ENCODE measurements at regions of chr9 and their contacts with region 1.

Region 1: DNA sequence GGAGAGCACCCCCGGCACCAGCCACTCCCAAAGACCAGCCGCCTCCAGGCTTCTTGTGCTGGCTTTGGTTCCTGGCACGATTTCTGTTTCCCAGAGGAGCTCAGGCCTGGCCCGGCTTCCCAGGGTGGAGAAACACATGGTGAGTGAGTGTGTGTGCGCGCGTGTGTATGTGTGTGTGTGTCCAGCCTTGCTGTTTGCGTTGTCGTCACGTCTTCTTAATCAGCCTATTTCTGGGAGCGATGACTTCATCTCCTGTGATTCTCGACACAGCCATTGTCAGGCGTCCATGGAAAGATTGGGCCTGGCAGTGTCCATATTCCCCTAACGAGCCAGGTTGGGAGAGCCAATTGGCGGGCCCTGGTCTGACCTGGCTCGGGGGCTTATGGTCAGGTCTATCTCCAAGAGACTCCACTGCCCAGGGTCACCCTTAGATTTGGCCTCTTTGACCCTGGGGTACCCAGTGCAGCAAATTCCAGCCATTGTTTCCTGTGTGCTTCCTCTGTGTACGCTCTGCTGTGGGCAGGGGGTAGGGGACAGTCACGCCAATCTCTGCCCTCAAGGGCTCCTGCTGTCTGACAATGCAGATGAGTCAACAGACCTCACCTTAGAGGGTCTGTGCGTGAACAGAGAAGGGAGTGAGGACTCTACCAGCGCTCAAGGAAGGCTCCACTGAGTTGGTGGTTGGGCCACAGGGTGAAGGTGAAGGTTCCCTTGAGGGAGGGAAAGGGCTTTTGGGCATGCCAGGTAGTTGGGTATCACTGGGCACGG is 73.8 kb downstream of the DAB2IP start:
- H3K4me3 ChIP-seq: no peak overlapping the region
- H3K27ac ChIP-seq: no peak overlapping the region
- H3K4me1 ChIP-seq: no peaks in the 10 kb centered on the region; the same call in none of the 2 replicates
- CTCF ChIP-seq: no peak

Region 2: GRCh38 chr9:121735065-121735789 is 10.0 kb after region 1 on chr9:
- CTCF ChIA-PET with region 1: interaction called, 11 read pairs
- POLR2A ChIA-PET with region 1: interaction called, 3 read pairs
- H3K4me3 ChIP-seq: no peak overlapping the region
- H3K27ac ChIP-seq: no peak overlapping the region
- H3K4me1 ChIP-seq: no peaks in the 10 kb centered on the region; the same call in 1 of the 2 replicates
- CTCF ChIP-seq: peak; percentile 44; the same call in 1 of the 2 replicates

Region 3: DNA sequence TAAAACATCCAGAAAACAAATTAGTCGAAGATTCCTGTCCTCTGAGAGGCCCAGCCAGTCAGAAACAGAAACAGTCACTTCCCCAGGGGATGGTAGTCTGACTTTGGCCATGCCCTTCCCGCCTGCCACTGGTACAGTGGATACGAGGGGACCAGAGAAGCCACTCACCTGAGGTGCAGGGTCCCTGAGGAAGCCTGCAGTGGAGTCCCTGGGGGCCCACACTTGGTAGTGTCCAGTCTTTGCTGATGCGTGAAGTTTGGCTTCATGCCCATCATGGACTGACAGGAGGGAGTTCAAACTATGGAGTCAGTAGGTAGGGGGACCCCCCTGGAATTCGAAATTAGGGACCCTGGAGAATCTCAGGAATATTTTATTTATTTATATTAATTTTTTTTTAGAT is 73.7 kb after region 1 on chr9:
- CTCF ChIA-PET with region 1: no interaction called
- POLR2A ChIA-PET with region 1: no interaction called
- H3K4me3 ChIP-seq: no peak overlapping the region
- H3K27ac ChIP-seq: no peak overlapping the region
- H3K4me1 ChIP-seq: no peaks in the 10 kb centered on the region
- CTCF ChIP-seq: no peak